ENCODE measurements at regions of chr7 and their contacts with region 1.

Region 1: DNA sequence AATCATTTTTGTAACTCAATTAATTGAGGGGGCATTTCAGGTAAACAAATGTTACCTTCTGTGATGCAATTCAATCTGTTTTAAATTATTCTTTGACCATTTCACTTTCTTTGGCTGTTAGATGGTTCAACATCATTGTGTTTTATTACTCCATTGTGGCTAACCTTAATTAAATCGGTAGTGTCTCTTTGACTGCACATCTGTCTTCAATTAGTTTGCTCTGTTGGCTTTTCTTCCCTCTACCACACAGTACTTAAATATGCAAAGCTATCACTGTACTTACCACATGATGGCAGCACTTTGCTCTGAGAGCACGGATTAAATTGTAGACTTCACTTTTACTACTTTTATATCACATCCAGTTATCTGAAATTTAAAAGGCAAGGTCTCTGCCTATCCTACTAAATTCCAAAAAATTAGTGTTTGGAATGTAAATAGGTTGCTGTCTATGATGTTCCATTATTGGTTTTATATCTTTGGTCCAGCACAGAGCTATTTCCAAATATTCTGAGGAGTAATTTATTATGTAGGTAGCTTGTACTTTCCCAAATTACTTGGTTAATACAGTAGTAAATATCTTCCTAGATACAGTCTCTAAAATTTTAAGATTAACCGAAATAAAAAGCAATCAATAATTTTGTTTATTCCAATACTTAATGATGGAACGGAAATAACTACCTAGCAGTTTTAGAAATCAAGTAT is 352.0 kb downstream of the PCLO start:
- DNase-seq: peak; percentile 67
- H3K4me3 ChIP-seq: no peak overlapping the region
- H3K27ac ChIP-seq: peak overlapping the region in 1 of 2 experiments; percentile 77; a peak in 1 of 4 replicates
- H3K4me1 ChIP-seq: peaks cover 7 to 22% of the 10 kb centered on the region in 2 experiments; a peak in 3 of 4 replicates
- H3K27me3 ChIP-seq: no peaks in the 10 kb centered on the region
- CTCF ChIP-seq: peak; percentile 98
- EP300 ChIP-seq: peak; percentile 58 to 91; a peak in 3 of 4 replicates
- RAD21 ChIP-seq: peak; percentile 93

Region 2: GRCh38 chr7:82821037-82821436 is 10.3 kb after region 1 on chr7:
- CTCF ChIA-PET with region 1: interaction called, 15 read pairs
- POLR2A ChIA-PET with region 1: no interaction called
- DNase-seq: no peak
- H3K4me3 ChIP-seq: no peak overlapping the region
- H3K27ac ChIP-seq: no peak overlapping the region
- H3K4me1 ChIP-seq: no peaks in the 10 kb centered on the region
- H3K27me3 ChIP-seq: no peaks in the 10 kb centered on the region
- CTCF ChIP-seq: no peak
- EP300 ChIP-seq: no peak
- RAD21 ChIP-seq: no peak

Region 3: DNA sequence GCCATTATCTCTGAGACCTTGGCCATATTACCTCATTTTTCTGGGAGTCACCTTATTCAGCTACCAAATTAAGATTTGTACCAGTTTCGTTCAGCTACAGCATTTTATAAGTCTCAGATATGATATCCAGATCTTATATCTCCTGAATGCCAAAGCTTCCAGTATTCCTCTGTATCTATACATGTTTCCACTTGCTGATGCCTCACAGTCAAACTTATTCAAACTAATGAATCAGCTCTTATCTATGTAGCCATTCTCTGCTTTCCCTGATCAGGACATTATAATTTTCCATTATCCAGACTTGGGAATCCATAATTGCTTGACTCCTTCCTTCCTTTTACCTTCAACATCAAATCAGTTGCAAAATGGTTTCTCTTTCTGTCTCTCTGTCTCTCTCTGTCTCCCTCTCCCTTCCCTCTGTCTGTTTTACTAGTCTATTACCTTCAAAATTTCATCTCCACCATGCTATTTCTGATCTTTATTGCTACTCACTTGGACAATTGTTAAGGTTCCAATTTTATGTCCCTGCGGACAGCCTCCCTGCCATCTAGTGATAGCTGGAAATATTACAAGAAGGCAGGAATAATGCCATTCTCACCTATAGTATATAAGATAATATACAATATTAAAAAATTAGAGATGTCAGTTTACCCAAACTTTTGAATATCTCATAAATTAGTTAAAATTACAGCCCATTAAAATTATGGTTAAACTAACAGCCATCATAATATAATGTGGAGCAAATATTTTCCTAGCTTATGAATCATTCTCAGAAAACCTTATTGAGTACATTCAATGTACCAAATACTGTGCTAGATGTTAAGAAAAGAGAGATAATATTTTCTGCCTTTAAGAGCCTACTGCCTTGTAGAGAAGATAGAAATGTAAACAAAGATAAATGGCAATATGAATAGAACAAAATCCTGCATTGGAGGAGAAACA is 262.1 kb after region 1 on chr7:
- CTCF ChIA-PET with region 1: interaction called, 26 read pairs
- POLR2A ChIA-PET with region 1: no interaction called
- DNase-seq: peak; percentile 25
- H3K4me3 ChIP-seq: no peak overlapping the region
- H3K27ac ChIP-seq: no peak overlapping the region
- H3K4me1 ChIP-seq: peaks cover 0 to 12% of the 10 kb centered on the region in 2 experiments; a peak in 1 of 4 replicates
- H3K27me3 ChIP-seq: no peaks in the 10 kb centered on the region
- CTCF ChIP-seq: peak; percentile 46
- EP300 ChIP-seq: no peak
- RAD21 ChIP-seq: peak; percentile 79

Region 4: DNA sequence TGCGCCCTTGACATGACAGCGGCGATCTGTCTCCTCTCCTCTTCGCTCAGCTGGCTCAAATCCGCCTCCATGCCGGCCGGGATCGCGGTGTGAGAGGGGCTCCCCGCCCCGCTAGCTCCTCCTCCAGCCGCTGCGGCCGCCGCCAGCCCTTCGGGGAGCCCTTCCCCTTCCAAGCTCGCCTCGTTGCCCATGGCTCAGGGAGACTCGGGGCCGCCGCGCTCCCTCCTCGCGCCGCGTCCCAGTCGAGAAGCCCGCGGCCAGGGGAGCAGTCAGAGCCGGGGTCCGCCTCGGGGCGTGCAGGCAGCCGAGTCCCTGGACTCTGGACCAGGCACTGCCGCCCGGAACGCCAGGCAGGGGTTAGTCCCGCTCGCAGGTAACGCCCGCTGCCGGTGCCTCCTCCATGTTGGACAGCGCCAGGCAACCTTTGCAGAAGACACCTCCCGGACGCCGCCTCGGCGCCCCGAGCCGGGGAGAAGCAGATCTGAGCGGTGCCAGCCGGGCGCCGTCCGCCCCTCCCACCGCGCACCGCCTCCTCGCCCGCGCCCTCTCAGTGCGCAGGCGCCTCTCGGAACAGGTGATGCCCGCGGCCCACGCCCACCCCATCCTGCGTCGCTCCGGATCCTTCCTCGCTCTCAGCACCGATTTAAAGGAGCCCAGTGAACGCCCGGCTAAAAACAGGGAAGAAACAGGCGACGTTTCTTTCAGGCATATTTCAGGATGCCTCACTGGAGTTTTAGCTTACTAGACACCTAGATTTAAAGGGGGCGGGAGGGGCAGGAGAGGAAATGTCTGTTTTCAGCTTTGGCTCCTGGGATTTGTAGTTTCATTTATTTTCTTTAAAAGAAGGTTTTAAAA is 351.9 kb after region 1 on chr7 and contains the start of gene PCLO:
- CTCF ChIA-PET with region 1: interaction called, 15 read pairs
- POLR2A ChIA-PET with region 1: interaction called, 4 read pairs
- DNase-seq: peak; percentile 96
- H3K4me3 ChIP-seq: peak within 1 kb of the TSS; percentile 64 to 96
- H3K27ac ChIP-seq: peak within 1 kb of the TSS; percentile 7 to 97; a peak in 2 of 4 replicates
- H3K4me1 ChIP-seq: peaks cover 0 to 6% of the 10 kb centered on the region in 2 experiments; a peak in 2 of 4 replicates
- H3K27me3 ChIP-seq: no peaks in the 10 kb centered on the region
- CTCF ChIP-seq: no peak
- EP300 ChIP-seq: no peak; a peak in 1 of 4 replicates
- RAD21 ChIP-seq: peak; percentile 17; the same call in 1 of the 2 replicates
- polyA plus RNA-seq, gene PCLO: 0.51 and 0.76 TPM in 2 replicates